ENCODE measurements at regions of chr11 and their contacts with region 1.

Region 1: GRCh38 chr11:117026593-117027330 is 71.5 kb downstream of the SIK3 start:
- DNase-seq: peak; percentile 1
- H3K4me3 Mint-ChIP-seq: no peak overlapping the region
- H3K27ac Mint-ChIP-seq: no peak overlapping the region
- H3K4me1 Mint-ChIP-seq: peaks cover 23% of the 10 kb centered on the region
- H3K27me3 Mint-ChIP-seq: no peaks in the 10 kb centered on the region
- CTCF ChIP-seq: no peak

Region 2: GRCh38 chr11:117072517-117073461 is 46.0 kb after region 1 on chr11:
- CTCF ChIA-PET with region 1: no interaction called
- intact Hi-C with region 1: loop called (anchors 10 kb)
- DNase-seq: peak; percentile 15
- H3K4me3 Mint-ChIP-seq: no peak overlapping the region
- H3K27ac Mint-ChIP-seq: no peak overlapping the region
- H3K4me1 Mint-ChIP-seq: peaks cover 25% of the 10 kb centered on the region
- H3K27me3 Mint-ChIP-seq: peaks cover 20% of the 10 kb centered on the region
- CTCF ChIP-seq: no peak